AG04449 (cell line): ENCODE measurements at regions of chr12 and their contacts with region 1.

Region 1: DNA sequence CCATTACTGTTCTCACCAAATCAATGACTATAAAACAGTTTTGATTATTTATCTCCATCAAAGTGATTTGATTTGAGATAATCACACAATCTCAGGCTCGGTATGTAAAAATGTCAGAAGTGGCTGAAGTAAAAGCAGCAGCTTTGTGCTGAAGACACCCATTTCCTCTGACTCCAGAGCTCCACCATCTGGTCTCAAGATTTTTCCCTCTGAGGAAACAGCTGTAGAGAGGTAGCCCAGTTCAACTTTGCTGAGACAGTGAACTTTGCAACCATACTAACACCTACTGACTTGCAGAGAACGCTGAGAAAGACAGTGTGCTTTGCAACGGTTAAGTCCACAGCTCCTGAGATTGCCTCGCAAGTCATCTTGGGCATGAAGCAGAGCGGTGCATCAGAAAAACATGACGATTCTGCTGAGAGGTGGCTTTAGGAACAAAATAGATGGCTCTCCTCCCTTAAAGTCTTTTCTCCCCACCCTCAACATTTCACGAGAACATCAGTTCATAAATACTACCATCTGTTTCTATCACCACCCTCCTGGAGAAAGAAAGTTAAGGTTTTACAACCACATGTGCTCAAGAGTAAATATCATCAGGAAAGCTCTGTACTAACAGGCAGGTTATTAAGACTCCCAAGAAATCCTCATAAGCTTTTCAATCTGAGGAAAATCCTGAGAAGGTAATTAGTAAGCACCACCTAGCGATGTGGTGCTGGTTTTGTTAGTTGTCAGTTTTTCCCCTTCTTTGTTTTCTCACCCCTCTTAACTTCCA is 34.8 kb downstream of the HIGD1C start:
- DNase-seq: no peak
- H3K4me3 ChIP-seq: no peak overlapping the region
- CTCF ChIP-seq: peak; percentile 57

Region 2: GRCh38 chr12:50763639-50764285 is 223.4 kb before region 1 on chr12 and contains the start of gene ATF1:
- CTCF ChIA-PET with region 1: interaction called, 106 read pairs
- POLR2A ChIA-PET with region 1: no interaction called
- DNase-seq: peak; percentile 38
- H3K4me3 ChIP-seq: peak within 1 kb of the TSS; percentile 89
- CTCF ChIP-seq: no peak

Region 3: DNA sequence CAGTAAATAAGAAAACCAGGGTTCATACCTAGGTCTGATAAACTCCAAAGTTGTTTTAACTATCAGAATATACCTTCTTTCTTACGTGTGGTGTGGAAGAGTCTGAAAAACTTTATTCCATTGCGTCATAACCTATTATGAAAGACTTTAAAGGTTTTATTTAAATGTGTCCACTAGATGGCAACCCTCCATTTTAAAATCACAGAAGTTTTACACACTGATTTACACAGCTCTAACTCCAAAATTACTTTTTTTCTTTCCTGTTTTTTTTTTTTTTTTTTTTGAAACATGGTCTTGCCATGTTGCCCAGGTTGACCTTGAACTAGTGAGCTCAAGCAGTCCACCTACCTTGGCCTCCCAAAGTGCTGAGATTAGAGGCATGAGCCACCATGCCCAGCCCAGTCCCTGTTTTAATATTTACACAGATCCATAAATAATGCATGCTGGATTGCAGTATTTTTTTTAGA is 161.7 kb before region 1 on chr12:
- CTCF ChIA-PET with region 1: interaction called, 201 read pairs
- POLR2A ChIA-PET with region 1: no interaction called
- DNase-seq: peak; percentile 26
- H3K4me3 ChIP-seq: no peak overlapping the region
- CTCF ChIP-seq: no peak

Region 4: DNA sequence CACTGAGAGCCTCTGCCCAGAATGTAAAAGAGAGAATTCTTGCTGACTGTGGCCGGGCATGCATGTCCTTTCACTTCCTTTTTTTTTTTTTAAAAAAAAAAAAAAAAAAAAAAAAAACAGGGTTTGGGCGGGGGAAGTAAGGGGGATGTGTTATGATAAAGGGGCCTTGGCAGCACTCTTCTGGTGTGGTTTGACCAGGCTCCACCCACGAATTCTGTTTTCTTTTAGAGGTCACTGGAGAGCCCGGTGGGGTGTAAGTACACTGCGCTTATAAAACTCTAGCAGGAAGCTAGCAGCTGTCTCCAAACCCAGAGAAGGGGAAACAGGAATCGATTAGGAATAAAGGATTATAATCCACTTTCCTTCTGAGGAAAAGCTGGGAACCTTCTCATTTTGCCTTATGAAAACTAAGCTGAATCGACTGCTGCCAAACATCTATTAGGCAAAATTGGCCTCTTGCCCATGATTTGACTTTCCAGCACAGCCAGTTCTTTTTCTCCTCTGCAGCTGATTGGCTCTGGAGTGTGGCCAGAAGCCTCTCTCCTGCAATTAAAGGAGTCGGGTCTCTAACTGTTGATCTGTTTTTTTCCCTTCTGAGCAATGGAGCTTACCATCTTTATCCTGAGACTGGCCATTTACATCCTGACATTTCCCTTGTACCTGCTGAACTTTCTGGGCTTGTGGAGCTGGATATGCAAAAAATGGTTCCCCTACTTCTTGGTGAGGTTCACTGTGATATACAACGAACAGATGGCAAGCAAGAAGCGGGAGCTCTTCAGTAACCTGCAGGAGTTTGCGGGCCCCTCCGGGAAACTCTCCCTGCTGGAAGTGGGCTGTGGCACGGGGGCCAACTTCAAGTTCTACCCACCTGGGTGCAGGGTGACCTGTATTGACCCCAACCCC is 62.5 kb before region 1 on chr12:
- CTCF ChIA-PET with region 1: interaction called, 10 read pairs
- POLR2A ChIA-PET with region 1: no interaction called
- DNase-seq: no peak
- H3K4me3 ChIP-seq: peak overlapping the region; percentile 44
- CTCF ChIP-seq: no peak

Region 5: GRCh38 chr12:50971946-50972345 is 15.2 kb before region 1 on chr12:
- CTCF ChIA-PET with region 1: interaction called, 18 read pairs
- POLR2A ChIA-PET with region 1: no interaction called
- DNase-seq: no peak
- H3K4me3 ChIP-seq: no peak overlapping the region
- CTCF ChIP-seq: no peak

Region 6: GRCh38 chr12:51000245-51000644 is 13.1 kb after region 1 on chr12:
- CTCF ChIA-PET with region 1: interaction called, 59 read pairs
- POLR2A ChIA-PET with region 1: no interaction called
- DNase-seq: peak; percentile 29
- H3K4me3 ChIP-seq: no peak overlapping the region
- CTCF ChIP-seq: no peak

Region 7: DNA sequence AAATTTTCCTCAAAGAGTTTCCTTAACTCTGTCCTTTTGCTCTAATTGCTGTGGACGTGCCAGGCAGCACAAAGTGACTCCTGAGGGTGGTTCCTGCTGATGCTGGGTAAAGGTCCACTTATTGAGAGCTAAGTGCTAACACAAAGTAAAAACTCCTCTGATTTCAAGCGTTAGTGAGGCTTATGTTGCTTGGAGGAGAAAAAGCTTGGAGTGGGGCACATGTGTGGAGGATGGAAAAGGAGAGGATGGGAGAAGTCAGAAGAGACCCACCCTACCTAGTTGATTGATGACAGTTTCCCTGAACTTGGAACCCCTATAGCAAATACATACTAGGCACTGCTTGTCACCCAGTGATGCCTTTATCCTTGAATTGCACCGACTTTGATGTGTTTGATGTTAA is 49.1 kb after region 1 on chr12:
- CTCF ChIA-PET with region 1: no interaction called
- POLR2A ChIA-PET with region 1: no interaction called
- DNase-seq: no peak
- H3K4me3 ChIP-seq: no peak overlapping the region
- CTCF ChIP-seq: no peak

Region 8: GRCh38 chr12:51225234-51225633 is 238.1 kb after region 1 on chr12:
- CTCF ChIA-PET with region 1: no interaction called
- POLR2A ChIA-PET with region 1: no interaction called
- DNase-seq: no peak
- H3K4me3 ChIP-seq: no peak overlapping the region
- CTCF ChIP-seq: no peak

Region 9: GRCh38 chr12:51351913-51352532 is 364.9 kb after region 1 on chr12:
- CTCF ChIA-PET with region 1: interaction called, 14 read pairs
- POLR2A ChIA-PET with region 1: no interaction called
- DNase-seq: no peak
- H3K4me3 ChIP-seq: no peak overlapping the region
- CTCF ChIP-seq: peak; percentile 76

Region 10: DNA sequence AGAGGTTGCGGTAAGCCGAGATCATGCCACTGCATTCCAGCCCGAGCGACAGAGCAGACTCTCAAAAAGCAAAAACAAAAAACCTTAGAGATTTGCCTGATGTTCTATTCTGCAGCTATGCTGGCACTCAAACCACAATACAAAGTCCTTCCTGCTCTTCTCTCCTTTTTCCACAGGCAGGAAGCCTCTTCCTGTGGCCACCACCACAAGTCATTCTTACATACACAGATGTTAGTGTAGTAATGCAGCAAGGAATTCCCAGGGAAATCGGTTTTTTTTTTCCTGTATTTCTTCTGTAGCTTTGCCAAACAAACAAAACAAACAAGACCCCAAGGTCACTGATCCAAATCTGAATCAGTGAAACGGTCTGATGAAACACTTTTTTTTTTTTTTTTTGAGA is 757.1 kb after region 1 on chr12:
- CTCF ChIA-PET with region 1: no interaction called
- POLR2A ChIA-PET with region 1: no interaction called
- DNase-seq: no peak
- H3K4me3 ChIP-seq: no peak overlapping the region
- CTCF ChIP-seq: no peak